ENCODE measurements at regions of chr16 and their contacts with region 1.

Region 1: GRCh38 chr16:70685938-70686375 is at the start of gene MTSS2:
- DNase-seq: peak; percentile 53
- ATAC-seq: peak; percentile 47
- H3K4me3 Mint-ChIP-seq: peak within 1 kb of the TSS; percentile 68
- H3K27ac Mint-ChIP-seq: no peak within 1 kb of the TSS
- H3K4me1 Mint-ChIP-seq: peaks cover 4% of the 10 kb centered on the region
- H3K27me3 Mint-ChIP-seq: no peaks in the 10 kb centered on the region
- CTCF ChIP-seq: no peak
- total RNA-seq, gene MTSS2: 4.4 to 4.6 TPM

Region 2: DNA sequence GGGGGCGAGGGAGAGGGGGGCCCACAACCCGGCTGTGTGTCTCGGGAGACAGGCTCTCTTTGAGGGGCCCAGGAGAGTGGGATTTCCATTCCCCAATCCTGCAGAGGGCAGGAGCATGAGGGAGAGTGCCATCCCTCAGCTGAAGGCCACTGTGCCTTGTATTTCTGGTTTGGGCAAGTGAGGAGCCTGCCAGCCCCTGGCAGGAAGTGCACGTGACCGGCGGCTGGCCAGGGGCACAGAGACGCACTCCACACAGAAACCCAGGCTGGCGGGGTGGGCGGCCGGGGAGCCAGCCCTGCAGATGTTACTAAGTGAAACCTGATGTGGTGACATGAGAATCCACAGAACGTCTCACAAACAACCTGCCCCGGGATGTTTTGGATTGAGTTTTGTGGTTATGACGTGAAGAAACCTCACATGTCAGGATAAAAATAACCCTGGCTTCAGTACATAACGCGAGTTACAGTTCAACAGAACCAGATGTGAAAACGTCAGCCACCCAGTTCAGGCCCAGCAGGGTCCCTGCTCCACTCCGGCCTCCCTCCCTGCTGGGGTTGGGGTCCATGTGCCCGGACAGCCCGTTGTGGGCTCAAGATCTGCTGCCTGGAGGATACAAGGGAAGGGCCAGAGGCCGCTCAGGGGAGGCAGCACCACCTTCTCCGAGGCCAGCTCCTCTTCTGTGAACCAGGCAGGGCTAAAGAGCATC is 51.6 kb after region 1 on chr16:
- CTCF ChIA-PET with region 1: interaction called, 10 read pairs
- POLR2A ChIA-PET with region 1: interaction called, 7 read pairs
- intact Hi-C with region 1: no loop called
- DNase-seq: peak; percentile 94
- ATAC-seq: peak; percentile 79
- H3K4me3 Mint-ChIP-seq: peak overlapping the region; percentile 66
- H3K27ac Mint-ChIP-seq: peak overlapping the region; percentile 96
- H3K4me1 Mint-ChIP-seq: peaks cover 74% of the 10 kb centered on the region
- H3K27me3 Mint-ChIP-seq: no peaks in the 10 kb centered on the region
- CTCF ChIP-seq: no peak

Region 3: GRCh38 chr16:70809396-70810060 is 123.6 kb after region 1 on chr16:
- CTCF ChIA-PET with region 1: no interaction called
- POLR2A ChIA-PET with region 1: no interaction called
- intact Hi-C with region 1: no loop called
- DNase-seq: no peak
- ATAC-seq: no peak
- H3K4me3 Mint-ChIP-seq: no peak overlapping the region
- H3K27ac Mint-ChIP-seq: no peak overlapping the region
- H3K4me1 Mint-ChIP-seq: no peaks in the 10 kb centered on the region
- H3K27me3 Mint-ChIP-seq: peaks cover 18% of the 10 kb centered on the region
- CTCF ChIP-seq: no peak

Measured in activated CD8-positive, alpha-beta T cell treated with anti-CD3 and anti-CD28 coated beads for 36 hours (primary cell).